Ascending aorta (tissue), 2 donors: ENCODE measurements at regions of chr13 and their contacts with region 1.

Region 1: DNA sequence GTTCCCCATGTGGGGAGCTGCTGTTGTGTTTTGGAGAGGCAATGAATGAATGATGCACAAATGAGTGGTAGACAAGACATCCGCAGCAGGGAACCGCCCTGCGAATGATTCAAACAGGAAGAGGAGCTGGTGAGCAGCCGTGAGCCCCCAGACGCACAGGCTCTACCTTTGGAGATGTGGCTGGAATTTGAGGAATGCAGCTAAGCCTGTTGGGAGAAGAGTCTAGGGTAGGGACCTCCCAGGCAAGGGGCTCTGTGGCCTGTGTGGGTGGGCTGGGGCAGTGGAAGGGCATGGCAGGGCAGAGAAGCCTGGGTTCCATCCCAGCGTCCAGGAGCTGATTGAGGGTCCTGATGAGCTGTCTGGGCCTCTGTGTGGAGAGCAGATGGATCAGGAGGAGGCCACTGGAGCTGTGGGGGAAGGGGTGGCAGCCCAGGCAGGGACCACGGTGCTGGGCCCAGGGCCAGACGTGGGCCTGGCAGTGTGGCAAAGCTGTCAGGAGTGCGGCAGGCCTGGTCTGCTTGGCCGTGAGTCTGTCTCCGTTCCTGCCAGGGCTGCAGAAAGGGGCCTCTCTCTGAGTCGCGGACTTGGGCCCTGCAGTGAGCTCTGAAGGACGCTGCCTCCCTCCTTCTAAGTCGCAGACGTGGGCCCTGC is 41.8 kb upstream of the DCUN1D2 start:
- DNase-seq: peak in 1 of 2 donors; percentile 56
- H3K4me3 ChIP-seq: no peak overlapping the region
- H3K27ac ChIP-seq: peak overlapping the region; percentile 3 to 33
- H3K4me1 ChIP-seq: peaks cover 4 to 6% of the 10 kb centered on the region in 2 donors
- H3K27me3 ChIP-seq: no peaks in the 10 kb centered on the region
- CTCF ChIP-seq: no peak

Region 2: GRCh38 chr13:113364311-113364889 is 167.9 kb before region 1 on chr13:
- intact Hi-C with region 1: no loop called
- DNase-seq: peak in 1 of 2 donors; percentile 61
- H3K4me3 ChIP-seq: peak overlapping the region; percentile 45 to 85
- H3K27ac ChIP-seq: peak overlapping the region in 1 of 2 donors; percentile 44
- H3K4me1 ChIP-seq: peaks cover 7 to 8% of the 10 kb centered on the region in 2 donors
- H3K27me3 ChIP-seq: peaks cover 5% of the 10 kb centered on the region
- CTCF ChIP-seq: no peak

Region 3: GRCh38 chr13:114204894-114205293 is 672.6 kb after region 1 on chr13:
- intact Hi-C with region 1: loop called (anchors 5 kb)
- DNase-seq: no peak
- H3K4me3 ChIP-seq: no peak overlapping the region
- H3K27ac ChIP-seq: no peak overlapping the region
- H3K4me1 ChIP-seq: peaks cover 0 to 3% of the 10 kb centered on the region in 2 donors
- H3K27me3 ChIP-seq: no peaks in the 10 kb centered on the region
- CTCF ChIP-seq: no peak